ENCODE measurements at regions of chr11 and their contacts with region 1.

Region 1: GRCh38 chr11:61816736-61817455 is at the start of gene FADS1:
- DNase-seq: peak; percentile 88
- ATAC-seq: peak; percentile 67
- H3K4me3 Mint-ChIP-seq: peak within 1 kb of the TSS; percentile 92
- H3K27ac Mint-ChIP-seq: peak within 1 kb of the TSS; percentile 91
- H3K4me1 Mint-ChIP-seq: peaks cover 11% of the 10 kb centered on the region
- H3K27me3 Mint-ChIP-seq: peaks cover 15% of the 10 kb centered on the region
- total RNA-seq, gene FADS1: 33.8 to 35.4 TPM

Region 2: DNA sequence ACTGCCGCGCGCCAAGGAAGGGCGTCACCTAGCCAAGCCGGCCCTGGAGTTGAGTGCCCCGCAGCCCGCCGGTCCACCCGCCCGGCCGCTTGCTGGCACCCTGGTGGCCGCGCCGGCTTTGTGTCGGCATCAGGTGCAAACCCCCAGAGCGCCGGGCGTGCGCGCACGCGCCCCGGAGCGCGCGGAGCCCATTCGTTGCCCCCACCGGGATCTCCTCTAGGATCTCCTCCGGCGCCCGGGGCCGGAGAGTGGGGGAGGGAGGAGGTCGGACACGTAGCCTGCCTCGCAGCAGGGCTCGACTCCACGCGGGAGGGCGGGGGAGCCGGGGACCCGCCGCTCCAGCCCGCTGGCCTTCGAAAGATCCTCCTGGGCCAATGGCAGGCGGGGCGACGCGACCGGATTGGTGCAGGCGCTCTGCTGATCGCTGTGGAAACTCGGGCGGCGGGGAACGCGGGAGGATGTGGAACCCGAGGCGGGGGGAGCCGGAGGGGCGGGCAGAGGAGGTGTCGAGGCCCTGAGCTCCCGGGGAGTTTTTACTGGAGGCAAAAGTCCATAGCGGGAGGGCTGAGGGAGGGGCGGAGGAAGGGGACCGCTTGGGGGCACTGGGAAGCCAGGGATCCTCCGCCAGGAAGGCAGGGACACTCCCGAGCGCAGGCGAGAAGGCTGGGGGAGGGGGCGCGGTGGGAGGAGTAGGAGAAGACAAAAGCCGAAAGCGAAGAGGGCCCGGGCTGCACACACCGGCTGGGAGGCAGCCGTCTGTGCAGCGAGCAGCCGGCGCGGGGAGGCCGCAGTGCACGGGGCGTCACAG is 10.9 kb after region 1 on chr11 and contains the start of gene FADS2:
- CTCF ChIA-PET with region 1: interaction called, 61 read pairs
- DNase-seq: peak; percentile 94
- ATAC-seq: peak; percentile 89
- H3K4me3 Mint-ChIP-seq: peak within 1 kb of the TSS; percentile 85
- H3K27ac Mint-ChIP-seq: peak within 1 kb of the TSS; percentile 90
- H3K4me1 Mint-ChIP-seq: peaks cover 43% of the 10 kb centered on the region
- H3K27me3 Mint-ChIP-seq: peaks cover 17% of the 10 kb centered on the region
- total RNA-seq, gene FADS2: 174 to 184 TPM

Measured in activated CD8-positive, alpha-beta memory T cell treated with anti-CD3 and anti-CD28 coated beads, Interleukin-2, amount 10 ng/mL, durations not matched to agents 7 days and 5 days (primary cell).